ENCODE measurements at regions of chr16 and their contacts with region 1.

Region 1: GRCh38 chr16:55991843-55992242 is 116.7 kb upstream of the CES5A start:
- DNase-seq: no peak
- H3K4me3 ChIP-seq: no peak overlapping the region
- H3K27ac ChIP-seq: no peak overlapping the region
- H3K4me1 ChIP-seq: no peaks in the 10 kb centered on the region
- H3K27me3 ChIP-seq: no peaks in the 10 kb centered on the region
- CTCF ChIP-seq: no peak
- POLR2A ChIP-seq: no peak

Region 2: DNA sequence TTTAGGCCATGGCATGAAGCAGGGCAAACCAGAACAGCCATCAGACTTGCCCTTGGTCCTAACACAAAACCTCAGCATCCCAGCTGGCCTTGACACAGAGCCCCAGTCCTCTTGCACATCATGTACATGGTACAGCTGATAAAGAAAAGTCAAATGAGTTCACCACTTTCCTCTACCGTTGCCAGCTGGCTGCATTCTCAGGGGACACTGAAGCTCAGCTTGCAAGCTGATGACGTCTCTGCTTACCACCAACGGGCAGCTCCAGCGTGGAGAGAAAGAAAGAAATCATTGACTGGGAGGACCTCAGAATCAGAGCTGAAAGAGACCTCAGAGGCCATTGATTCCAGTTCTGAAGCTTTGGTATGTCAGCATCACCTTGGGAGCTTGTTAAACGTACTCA is 36.0 kb before region 1 on chr16:
- intact Hi-C with region 1: no loop called
- DNase-seq: peak; percentile 73
- H3K4me3 ChIP-seq: no peak overlapping the region
- H3K27ac ChIP-seq: peak overlapping the region in 1 of 2 donors; percentile 77
- H3K4me1 ChIP-seq: peaks cover 11% of the 10 kb centered on the region
- H3K27me3 ChIP-seq: no peaks in the 10 kb centered on the region
- CTCF ChIP-seq: no peak
- POLR2A ChIP-seq: no peak

Region 3: GRCh38 chr16:56068314-56068713 is 76.5 kb after region 1 on chr16:
- intact Hi-C with region 1: no loop called
- DNase-seq: no peak
- H3K4me3 ChIP-seq: no peak overlapping the region
- H3K27ac ChIP-seq: no peak overlapping the region
- H3K4me1 ChIP-seq: no peaks in the 10 kb centered on the region
- H3K27me3 ChIP-seq: no peaks in the 10 kb centered on the region
- CTCF ChIP-seq: no peak
- POLR2A ChIP-seq: no peak

Region 4: GRCh38 chr16:56519459-56520250 is 527.8 kb after region 1 on chr16 and contains the start of gene BBS2:
- intact Hi-C with region 1: loop called (anchors 5 kb)
- DNase-seq: peak; percentile 89
- H3K4me3 ChIP-seq: peak within 1 kb of the TSS; percentile 90 to 100
- H3K27ac ChIP-seq: peak within 1 kb of the TSS; percentile 83 to 87
- H3K4me1 ChIP-seq: peaks cover 18% of the 10 kb centered on the region
- H3K27me3 ChIP-seq: no peaks in the 10 kb centered on the region
- CTCF ChIP-seq: peak in 1 of 3 experiments; percentile 30
- POLR2A ChIP-seq: no peak
- total RNA-seq, gene BBS2: 70.3 to 83.6 TPM